ENCODE measurements at regions of chr5 and their contacts with region 1.

Region 1: DNA sequence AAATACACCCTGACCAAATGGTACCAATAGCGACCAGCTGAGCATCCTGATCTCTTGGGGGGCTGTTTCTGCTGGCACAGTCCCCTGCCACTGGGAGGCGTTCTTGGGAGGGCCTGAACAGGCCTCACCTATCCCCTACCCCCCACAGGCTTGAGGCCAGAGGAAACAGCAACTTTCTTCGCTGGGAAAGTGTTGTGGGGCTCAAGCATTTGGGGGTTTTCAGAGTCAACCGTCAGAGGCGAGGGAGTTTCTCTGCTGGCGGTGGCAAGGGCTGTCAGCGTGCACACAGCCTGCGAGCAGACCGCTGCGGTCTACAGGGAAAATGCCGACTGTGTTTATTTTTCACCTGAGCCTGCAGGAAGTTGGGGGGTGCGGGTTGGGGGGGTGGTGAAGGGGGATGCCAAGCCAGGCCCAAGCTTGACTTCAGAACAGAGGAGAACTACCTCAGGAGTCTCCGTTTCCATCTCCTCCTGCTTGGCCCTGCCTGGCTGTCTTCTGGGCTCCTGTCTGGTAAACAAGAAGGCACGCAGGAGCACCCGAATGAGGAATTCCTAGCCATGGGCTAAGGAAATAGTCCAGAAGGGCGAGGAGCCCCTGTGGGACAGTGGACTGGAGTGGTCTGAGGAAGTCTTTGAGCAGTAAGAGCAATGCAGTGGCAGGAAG is 18.0 kb downstream of the TCF7 start:
- DNase-seq: peak; percentile 75 to 97
- ATAC-seq: peak; percentile 72 to 90 (median 86)
- H3K4me3 ChIP-seq: no peak overlapping the region
- H3K4me3 Mint-ChIP-seq: peak overlapping the region; percentile 85
- H3K27ac ChIP-seq: peak overlapping the region; percentile 98
- H3K27ac Mint-ChIP-seq: peak overlapping the region; percentile 98
- H3K4me1 ChIP-seq: peaks cover 100% of the 10 kb centered on the region
- H3K4me1 Mint-ChIP-seq: peaks cover 57 to 81% of the 10 kb centered on the region in 2 donors
- H3K27me3 ChIP-seq: no peaks in the 10 kb centered on the region
- H3K27me3 Mint-ChIP-seq: no peaks in the 10 kb centered on the region
- CTCF ChIP-seq: peak; percentile 56

Region 2: GRCh38 chr5:134113902-134114875 is 18.3 kb before region 1 on chr5 and contains the start of gene TCF7:
- intact Hi-C with region 1: loop called (anchors 2 kb)
- DNase-seq: peak; percentile 67 to 92
- ATAC-seq: peak; percentile 71 to 88 (median 83)
- H3K4me3 ChIP-seq: peak within 1 kb of the TSS; percentile 85
- H3K4me3 Mint-ChIP-seq: peak within 1 kb of the TSS; percentile 94
- H3K27ac ChIP-seq: peak within 1 kb of the TSS; percentile 76
- H3K27ac Mint-ChIP-seq: peak within 1 kb of the TSS; percentile 87 to 91
- H3K4me1 ChIP-seq: peaks cover 66% of the 10 kb centered on the region
- H3K4me1 Mint-ChIP-seq: peaks cover 31 to 51% of the 10 kb centered on the region in 2 donors
- H3K27me3 ChIP-seq: no peaks in the 10 kb centered on the region
- H3K27me3 Mint-ChIP-seq: peaks cover 0 to 4% of the 10 kb centered on the region in 2 donors
- CTCF ChIP-seq: no peak
- total RNA-seq, gene TCF7: 97.7 to 203 (median 158) TPM

Measured in natural killer cell (primary cell).